Psoas muscle (tissue), 8 donors: ENCODE measurements at regions of chr9 and their contacts with region 1.

Region 1: GRCh38 chr9:126334721-126335621 is 8.3 kb downstream of the MVB12B start:
- DNase-seq: peak in 1 of 2 donors; percentile 78
- ATAC-seq: peak; percentile 84 to 87 (median 86)
- H3K4me3 ChIP-seq: peak overlapping the region; percentile 55
- H3K27ac ChIP-seq: peak overlapping the region; percentile 74
- H3K4me1 ChIP-seq: peaks cover 75% of the 10 kb centered on the region
- H3K27me3 ChIP-seq: no peaks in the 10 kb centered on the region
- CTCF ChIP-seq: no peak

Region 2: GRCh38 chr9:126375386-126375785 is 40.4 kb after region 1 on chr9:
- intact Hi-C with region 1: loop called (anchors 5 kb)
- DNase-seq: no peak
- ATAC-seq: peak in 2 of 4 donors; percentile 51 to 61
- H3K4me3 ChIP-seq: peak overlapping the region; percentile 19
- H3K27ac ChIP-seq: no peak overlapping the region
- H3K4me1 ChIP-seq: peaks cover 50% of the 10 kb centered on the region
- H3K27me3 ChIP-seq: no peaks in the 10 kb centered on the region
- CTCF ChIP-seq: no peak

Region 3: DNA sequence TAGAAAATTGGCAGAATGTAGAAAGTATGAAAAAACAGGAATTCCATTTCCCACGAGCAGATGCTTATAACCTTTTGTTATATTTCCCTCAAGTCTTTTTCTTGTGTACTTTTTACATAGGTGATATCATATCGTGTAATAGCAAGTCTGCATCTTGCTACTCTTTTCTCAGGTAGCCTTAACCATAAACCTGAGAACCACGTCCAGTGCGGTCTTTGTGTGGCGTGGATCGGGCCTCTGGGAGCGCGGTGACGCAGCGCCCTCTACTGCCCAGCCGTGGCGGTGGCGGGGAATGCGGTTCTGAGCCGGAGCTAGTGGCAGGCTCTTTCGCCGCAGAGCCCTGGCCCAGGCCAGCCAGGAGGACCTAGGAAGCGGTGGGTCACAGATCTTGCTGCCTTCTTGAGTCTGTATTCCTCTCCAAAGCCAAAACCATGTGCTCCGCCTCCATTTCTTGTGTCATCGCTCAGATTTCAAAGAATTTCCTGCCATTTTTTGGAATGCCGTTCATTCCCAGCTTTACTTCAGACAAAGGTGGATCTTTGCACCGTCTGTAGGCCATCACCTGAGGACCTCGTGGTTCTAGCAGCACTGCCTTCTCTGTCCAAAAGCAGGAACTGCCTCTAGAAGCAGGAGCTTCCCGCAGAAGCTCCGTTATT is 63.6 kb after region 1 on chr9:
- intact Hi-C with region 1: no loop called
- DNase-seq: peak; percentile 79 to 89
- ATAC-seq: peak; percentile 84 to 92 (median 86)
- H3K4me3 ChIP-seq: no peak overlapping the region
- H3K27ac ChIP-seq: no peak overlapping the region
- H3K4me1 ChIP-seq: peaks cover 35% of the 10 kb centered on the region
- H3K27me3 ChIP-seq: no peaks in the 10 kb centered on the region
- CTCF ChIP-seq: peak; percentile 99